ENCODE measurements at regions of chr20 and their contacts with region 1.

Region 1: GRCh38 chr20:24992487-24993205 is at the start of gene APMAP:
- DNase-seq: peak; percentile 96 to 98 (median 96)
- H3K4me3 ChIP-seq: peak within 1 kb of the TSS; percentile 93
- H3K27ac ChIP-seq: peak within 1 kb of the TSS; percentile 54 to 92
- H3K4me1 ChIP-seq: peaks cover 3% of the 10 kb centered on the region
- H3K27me3 ChIP-seq: no peaks in the 10 kb centered on the region
- CTCF ChIP-seq: no peak
- EP300 ChIP-seq: no peak
- POLR2A ChIP-seq: peak; percentile 96
- total RNA-seq, gene APMAP: 23.5 to 59.0 (median 45.3) TPM

Region 2: GRCh38 chr20:25057234-25058050 is 64.8 kb after region 1 on chr20:
- intact Hi-C with region 1: loop called in 1 of 4 experiments (anchors 2 kb)
- DNase-seq: peak; percentile 58 to 69 (median 67)
- H3K4me3 ChIP-seq: peak overlapping the region; percentile 80
- H3K27ac ChIP-seq: peak overlapping the region; percentile 74 to 86
- H3K4me1 ChIP-seq: peaks cover 37% of the 10 kb centered on the region
- H3K27me3 ChIP-seq: no peaks in the 10 kb centered on the region
- CTCF ChIP-seq: no peak
- EP300 ChIP-seq: no peak
- POLR2A ChIP-seq: peak; percentile 34

Region 3: DNA sequence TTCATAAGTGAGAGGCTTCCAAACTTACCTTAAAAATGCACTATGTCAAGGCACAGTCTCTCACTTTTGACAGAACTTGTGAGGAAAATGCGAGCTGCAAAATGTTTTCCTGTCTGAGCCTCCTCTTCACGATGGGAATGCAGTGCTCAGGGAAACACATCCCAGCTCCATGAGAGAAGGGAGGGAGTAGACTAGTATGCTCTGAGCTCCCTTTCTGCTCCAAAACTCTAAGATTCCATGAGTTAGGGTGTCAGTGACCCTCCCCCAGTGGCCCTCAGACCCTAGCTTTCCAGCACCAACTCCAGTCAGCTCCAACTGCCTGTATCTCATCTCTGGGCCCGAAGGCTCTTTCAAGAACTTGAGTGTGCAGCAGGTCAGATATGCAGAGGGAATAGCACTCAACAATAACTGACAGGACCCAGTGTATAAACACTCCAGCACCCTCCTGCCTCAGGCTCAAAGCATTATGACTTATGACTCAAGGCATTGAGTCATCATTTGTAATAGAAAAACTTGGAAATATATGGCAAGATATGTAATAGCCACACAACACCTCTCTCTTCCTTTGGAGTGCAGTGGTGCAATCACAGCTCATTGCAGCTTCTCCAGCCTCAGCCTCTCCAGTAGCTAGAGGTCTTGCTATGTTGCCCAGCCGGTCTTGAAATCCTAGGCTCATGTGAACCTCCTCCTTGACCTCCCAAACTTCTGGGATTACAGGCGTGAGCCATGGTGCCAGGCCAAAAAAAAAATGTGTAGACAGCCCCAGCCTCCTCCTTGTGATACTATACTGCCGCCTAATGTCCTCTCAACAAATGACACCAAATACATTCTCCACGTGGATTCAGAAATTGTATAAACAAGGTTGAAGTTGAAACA is 186.2 kb after region 1 on chr20:
- intact Hi-C with region 1: loop called in 2 of 4 experiments (anchors 5 kb)
- DNase-seq: peak in 2 of 5 donors; percentile 49 to 59
- H3K4me3 ChIP-seq: no peak overlapping the region
- H3K27ac ChIP-seq: no peak overlapping the region
- H3K4me1 ChIP-seq: peaks cover 10% of the 10 kb centered on the region
- H3K27me3 ChIP-seq: no peaks in the 10 kb centered on the region
- CTCF ChIP-seq: peak; percentile 49 to 61 (median 53)
- EP300 ChIP-seq: no peak
- POLR2A ChIP-seq: no peak

Region 4: GRCh38 chr20:25294459-25295385 is 302.1 kb after region 1 on chr20:
- intact Hi-C with region 1: loop called in 1 of 4 experiments (anchors 10 kb)
- DNase-seq: peak; percentile 50 to 70 (median 62)
- H3K4me3 ChIP-seq: no peak overlapping the region
- H3K27ac ChIP-seq: no peak overlapping the region
- H3K4me1 ChIP-seq: no peaks in the 10 kb centered on the region
- H3K27me3 ChIP-seq: no peaks in the 10 kb centered on the region
- CTCF ChIP-seq: peak; percentile 28 to 72 (median 63)
- EP300 ChIP-seq: no peak
- POLR2A ChIP-seq: no peak

Region 5: GRCh38 chr20:25399037-25399430 is 406.4 kb after region 1 on chr20:
- intact Hi-C with region 1: loop called in 2 of 4 experiments (anchors 5 to 10 kb)
- DNase-seq: peak in 1 of 5 donors; percentile 46
- H3K4me3 ChIP-seq: no peak overlapping the region
- H3K27ac ChIP-seq: no peak overlapping the region
- H3K4me1 ChIP-seq: no peaks in the 10 kb centered on the region
- H3K27me3 ChIP-seq: no peaks in the 10 kb centered on the region
- CTCF ChIP-seq: peak; percentile 29 to 50 (median 50)
- EP300 ChIP-seq: no peak
- POLR2A ChIP-seq: no peak

Measured in ovary (tissue), 10 donors.